ENCODE measurements at regions of chr10 and their contacts with region 1.

Region 1: GRCh38 chr10:26378861-26379294 is 59.3 kb upstream of the APBB1IP start:
- DNase-seq: peak in 1 of 14 experiments; percentile 18
- ATAC-seq: no peak
- H3K4me3 ChIP-seq: no peak overlapping the region
- H3K4me3 Mint-ChIP-seq: no peak overlapping the region
- H3K27ac ChIP-seq: no peak overlapping the region
- H3K27ac Mint-ChIP-seq: no peak overlapping the region
- H3K4me1 ChIP-seq: no peaks in the 10 kb centered on the region
- H3K4me1 Mint-ChIP-seq: no peaks in the 10 kb centered on the region
- H3K27me3 ChIP-seq: no peaks in the 10 kb centered on the region
- H3K27me3 Mint-ChIP-seq: peaks cover 6% of the 10 kb centered on the region
- CTCF ChIP-seq: no peak

Region 2: GRCh38 chr10:26194275-26194674 is 184.6 kb before region 1 on chr10:
- CTCF ChIA-PET with region 1: no interaction called
- POLR2A ChIA-PET with region 1: no interaction called
- intact Hi-C with region 1: no loop called
- DNase-seq: no peak
- ATAC-seq: no peak
- H3K4me3 ChIP-seq: no peak overlapping the region
- H3K4me3 Mint-ChIP-seq: no peak overlapping the region
- H3K27ac ChIP-seq: no peak overlapping the region
- H3K27ac Mint-ChIP-seq: no peak overlapping the region
- H3K4me1 ChIP-seq: no peaks in the 10 kb centered on the region
- H3K4me1 Mint-ChIP-seq: no peaks in the 10 kb centered on the region
- H3K27me3 ChIP-seq: peaks cover 0 to under 1% of the 10 kb centered on the region in 2 experiments
- H3K27me3 Mint-ChIP-seq: peaks cover 16% of the 10 kb centered on the region
- CTCF ChIP-seq: no peak

Region 3: DNA sequence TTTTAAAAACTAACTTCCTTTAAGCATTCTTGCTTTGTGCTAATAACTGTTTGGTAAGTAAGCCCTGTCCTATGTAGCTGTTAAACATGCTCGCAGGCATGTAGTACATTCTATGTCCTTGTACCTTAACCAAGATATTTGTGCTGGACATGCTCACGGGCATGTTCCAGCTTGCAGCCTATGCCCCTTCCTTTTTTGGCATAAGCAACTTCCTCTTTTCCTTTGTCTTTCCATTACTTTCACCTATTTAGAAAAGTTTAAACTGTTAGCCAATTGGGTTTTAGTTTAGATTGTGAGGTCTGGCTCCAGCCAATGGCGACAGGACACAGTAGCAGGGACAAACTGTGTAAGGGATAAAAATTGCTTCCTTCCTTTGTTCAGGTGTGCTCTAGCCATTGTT is 44.8 kb after region 1 on chr10:
- CTCF ChIA-PET with region 1: no interaction called
- POLR2A ChIA-PET with region 1: no interaction called
- intact Hi-C with region 1: loop called in 1 of 2 experiments (anchors 1 kb)
- DNase-seq: no peak
- ATAC-seq: no peak
- H3K4me3 ChIP-seq: no peak overlapping the region
- H3K4me3 Mint-ChIP-seq: no peak overlapping the region
- H3K27ac ChIP-seq: no peak overlapping the region
- H3K27ac Mint-ChIP-seq: no peak overlapping the region
- H3K4me1 ChIP-seq: no peaks in the 10 kb centered on the region
- H3K4me1 Mint-ChIP-seq: no peaks in the 10 kb centered on the region
- H3K27me3 ChIP-seq: no peaks in the 10 kb centered on the region
- H3K27me3 Mint-ChIP-seq: no peaks in the 10 kb centered on the region
- CTCF ChIP-seq: no peak

Region 4: GRCh38 chr10:26448706-26449435 is 70.0 kb after region 1 on chr10:
- CTCF ChIA-PET with region 1: no interaction called
- POLR2A ChIA-PET with region 1: no interaction called
- intact Hi-C with region 1: no loop called
- DNase-seq: peak; percentile 42 to 94 (median 62)
- ATAC-seq: peak; percentile 82
- H3K4me3 ChIP-seq: peak overlapping the region; percentile 20
- H3K4me3 Mint-ChIP-seq: peak overlapping the region; percentile 84
- H3K27ac ChIP-seq: peak overlapping the region; percentile 70 to 79
- H3K27ac Mint-ChIP-seq: peak overlapping the region; percentile 94
- H3K4me1 ChIP-seq: peaks cover 66% of the 10 kb centered on the region
- H3K4me1 Mint-ChIP-seq: peaks cover 92% of the 10 kb centered on the region
- H3K27me3 ChIP-seq: no peaks in the 10 kb centered on the region
- H3K27me3 Mint-ChIP-seq: no peaks in the 10 kb centered on the region
- CTCF ChIP-seq: no peak